ENCODE measurements at regions of chr19 and their contacts with region 1.

Region 1: DNA sequence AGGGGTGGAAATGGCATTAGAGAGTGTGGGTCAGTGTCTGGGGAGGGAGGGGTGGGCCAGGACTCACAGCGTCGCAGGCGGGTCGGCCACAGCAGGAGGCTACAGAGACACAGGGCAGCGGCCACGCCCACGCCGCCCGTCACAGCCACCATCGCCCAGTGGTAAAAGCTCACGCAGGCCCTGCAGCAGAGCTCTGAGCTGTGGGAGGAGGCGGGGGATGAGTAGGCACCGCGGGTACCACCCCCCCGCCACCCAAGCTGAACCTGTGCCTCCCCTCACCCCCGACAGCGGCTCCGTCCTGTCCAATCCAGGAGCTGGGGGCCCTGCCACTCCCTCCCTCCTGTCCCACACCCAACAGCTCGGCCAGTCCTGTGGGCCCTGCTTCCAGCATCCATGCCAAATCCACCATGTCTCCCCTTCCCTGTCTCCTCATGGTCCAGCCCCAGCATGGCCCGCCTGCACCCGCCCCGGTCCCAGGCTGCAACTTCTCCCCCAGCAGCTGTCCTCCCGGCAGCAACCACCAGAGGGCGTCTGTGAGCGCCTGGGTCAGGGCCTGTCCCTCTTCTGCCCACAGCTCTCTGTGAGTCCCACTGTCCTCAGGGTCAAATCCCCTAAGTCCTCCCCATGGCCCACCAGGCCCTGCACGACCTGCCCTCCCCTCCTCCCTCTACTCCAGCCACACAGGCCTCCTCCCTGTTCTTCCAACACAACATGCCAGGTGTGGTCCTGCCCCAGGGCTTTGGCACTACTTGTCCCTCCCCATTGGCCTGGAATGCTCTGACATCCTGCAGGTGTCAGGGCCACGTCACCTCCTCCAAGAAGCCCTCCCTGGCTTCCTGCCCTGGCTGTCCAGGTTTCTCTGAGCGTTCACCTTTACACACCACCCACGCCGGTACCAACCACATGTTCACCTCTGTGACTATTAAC is 6.0 kb downstream of the TEKTIP1 start:
- DNase-seq: peak; percentile 67 to 92 (median 86)
- ATAC-seq: peak; percentile 44 to 70
- H3K4me3 ChIP-seq: no peak overlapping the region
- H3K27ac ChIP-seq: no peak overlapping the region
- H3K4me1 ChIP-seq: no peaks in the 10 kb centered on the region
- H3K27me3 ChIP-seq: no peaks in the 10 kb centered on the region

Region 2: GRCh38 chr19:3618144-3618810 is 73.3 kb after region 1 on chr19:
- intact Hi-C with region 1: loop called in 3 of 4 experiments (anchors 5 to 10 kb)
- DNase-seq: peak; percentile 84 to 93 (median 92)
- ATAC-seq: peak; percentile 84 to 85
- H3K4me3 ChIP-seq: no peak overlapping the region
- H3K27ac ChIP-seq: no peak overlapping the region
- H3K4me1 ChIP-seq: no peaks in the 10 kb centered on the region
- H3K27me3 ChIP-seq: no peaks in the 10 kb centered on the region

Region 3: GRCh38 chr19:3700221-3701032 is 155.4 kb after region 1 on chr19 and contains the start of gene PIP5K1C:
- intact Hi-C with region 1: loop called in 2 of 4 experiments (anchors 10 kb)
- DNase-seq: peak; percentile 89 to 97 (median 96)
- ATAC-seq: peak; percentile 88 to 92
- H3K4me3 ChIP-seq: peak within 1 kb of the TSS; percentile 94
- H3K27ac ChIP-seq: peak within 1 kb of the TSS; percentile 83
- H3K4me1 ChIP-seq: peaks cover 6% of the 10 kb centered on the region
- H3K27me3 ChIP-seq: no peaks in the 10 kb centered on the region
- total RNA-seq, gene PIP5K1C: 38.8 to 48.3 (median 40.4) TPM

Region 4: GRCh38 chr19:3721131-3721886 is 176.3 kb after region 1 on chr19:
- intact Hi-C with region 1: no loop called
- DNase-seq: peak; percentile 82 to 92 (median 88)
- ATAC-seq: peak; percentile 79 to 85
- H3K4me3 ChIP-seq: peak overlapping the region; percentile 3
- H3K27ac ChIP-seq: no peak overlapping the region
- H3K4me1 ChIP-seq: no peaks in the 10 kb centered on the region
- H3K27me3 ChIP-seq: no peaks in the 10 kb centered on the region

Measured in right cardiac atrium (tissue), 5 donors.